ENCODE measurements at regions of chr1 and their contacts with region 1.

Region 1: GRCh38 chr1:162847839-162848453 is 13.0 kb downstream of the CCDC190 start:
- DNase-seq: peak; percentile 65 to 81
- H3K4me3 ChIP-seq: no peak overlapping the region
- H3K4me3 Mint-ChIP-seq: no peak overlapping the region
- H3K27ac Mint-ChIP-seq: no peak overlapping the region
- H3K4me1 ChIP-seq: no peaks in the 10 kb centered on the region
- H3K4me1 Mint-ChIP-seq: no peaks in the 10 kb centered on the region
- H3K27me3 ChIP-seq: no peaks in the 10 kb centered on the region
- H3K27me3 Mint-ChIP-seq: peaks cover 3% of the 10 kb centered on the region
- CTCF ChIP-seq: peak; percentile 86 to 87

Region 2: GRCh38 chr1:162878000-162878596 is 30.2 kb after region 1 on chr1:
- CTCF ChIA-PET with region 1: no interaction called
- POLR2A ChIA-PET with region 1: no interaction called
- intact Hi-C with region 1: no loop called
- DNase-seq: peak; percentile 72 to 74
- H3K4me3 ChIP-seq: no peak overlapping the region
- H3K4me3 Mint-ChIP-seq: no peak overlapping the region
- H3K27ac Mint-ChIP-seq: no peak overlapping the region
- H3K4me1 ChIP-seq: peaks cover 12% of the 10 kb centered on the region
- H3K4me1 Mint-ChIP-seq: no peaks in the 10 kb centered on the region
- H3K27me3 ChIP-seq: no peaks in the 10 kb centered on the region
- H3K27me3 Mint-ChIP-seq: no peaks in the 10 kb centered on the region
- CTCF ChIP-seq: peak; percentile 70 to 74

Region 3: GRCh38 chr1:163071405-163072255 is 223.7 kb after region 1 on chr1:
- CTCF ChIA-PET with region 1: interaction called, 10 read pairs
- POLR2A ChIA-PET with region 1: no interaction called
- intact Hi-C with region 1: loop called (anchors 1 kb)
- DNase-seq: peak; percentile 67 to 69
- H3K4me3 ChIP-seq: no peak overlapping the region
- H3K4me3 Mint-ChIP-seq: no peak overlapping the region
- H3K27ac Mint-ChIP-seq: no peak overlapping the region
- H3K4me1 ChIP-seq: peaks cover 3% of the 10 kb centered on the region; the same call in 1 of the 2 replicates
- H3K4me1 Mint-ChIP-seq: no peaks in the 10 kb centered on the region
- H3K27me3 ChIP-seq: no peaks in the 10 kb centered on the region
- H3K27me3 Mint-ChIP-seq: peaks cover 13% of the 10 kb centered on the region
- CTCF ChIP-seq: peak; percentile 69 to 82

Region 4: DNA sequence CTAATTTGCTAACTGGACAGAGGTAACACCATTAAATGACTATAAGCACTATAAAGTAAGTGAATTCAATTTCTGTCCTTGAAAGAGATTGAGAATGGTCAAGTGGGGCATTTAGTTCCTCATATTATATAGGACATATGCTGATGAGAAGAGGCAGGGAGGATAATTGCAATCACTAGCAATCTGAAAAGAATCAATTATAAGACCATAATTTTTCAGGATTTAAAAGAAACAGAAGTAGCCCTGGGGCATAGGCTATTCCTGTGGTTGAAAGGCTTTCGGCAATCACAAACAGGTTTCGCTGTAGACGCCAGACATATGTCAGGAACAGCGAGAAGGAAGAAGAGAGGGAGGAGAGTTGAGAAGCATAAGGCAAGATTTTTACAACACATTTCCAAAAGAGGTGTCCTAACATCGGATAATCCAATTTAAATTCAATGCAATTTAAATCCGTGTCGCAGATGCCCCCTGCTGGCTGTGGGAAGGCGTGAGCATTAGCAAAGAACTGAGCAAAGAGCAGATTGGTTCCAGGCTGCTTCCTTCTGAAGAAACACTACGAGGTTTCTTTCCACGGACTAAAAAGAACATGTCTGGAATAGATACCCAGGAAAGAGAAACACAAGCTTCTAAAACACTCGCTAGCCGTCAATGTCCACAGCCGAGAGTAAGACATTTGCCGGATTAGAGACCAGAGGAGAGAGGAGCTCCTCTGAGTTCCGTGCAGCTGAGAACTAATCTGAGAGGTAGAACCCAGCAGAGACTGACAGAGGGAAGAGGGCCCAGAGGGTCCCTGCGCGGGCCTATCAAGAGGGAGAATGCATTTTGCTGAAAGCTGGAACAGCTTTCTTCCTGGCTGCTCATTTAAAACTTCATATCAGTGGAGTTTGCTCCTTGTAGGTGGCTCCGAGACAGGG is 326.8 kb after region 1 on chr1:
- CTCF ChIA-PET with region 1: no interaction called
- POLR2A ChIA-PET with region 1: no interaction called
- intact Hi-C with region 1: loop called (anchors 1 kb)
- DNase-seq: peak; percentile 34 to 55
- H3K4me3 ChIP-seq: no peak overlapping the region
- H3K4me3 Mint-ChIP-seq: no peak overlapping the region
- H3K27ac Mint-ChIP-seq: no peak overlapping the region
- H3K4me1 ChIP-seq: no peaks in the 10 kb centered on the region
- H3K4me1 Mint-ChIP-seq: no peaks in the 10 kb centered on the region
- H3K27me3 ChIP-seq: no peaks in the 10 kb centered on the region
- H3K27me3 Mint-ChIP-seq: peaks cover 3% of the 10 kb centered on the region
- CTCF ChIP-seq: peak; percentile 82 to 84

Measured in Caco-2 (cell line).